ENCODE measurements at regions of chr17 and their contacts with region 1.

Region 1: GRCh38 chr17:67293251-67294203 is 48.5 kb upstream of the HELZ start:
- DNase-seq: peak; percentile 61 to 85
- ATAC-seq: peak; percentile 89 to 98 (median 98)
- H3K4me3 ChIP-seq: no peak overlapping the region
- H3K4me3 Mint-ChIP-seq: peak overlapping the region; percentile 35
- H3K27ac ChIP-seq: no peak overlapping the region
- H3K27ac Mint-ChIP-seq: no peak overlapping the region
- H3K4me1 ChIP-seq: peaks cover 14% of the 10 kb centered on the region
- H3K4me1 Mint-ChIP-seq: peaks cover 14 to 19% of the 10 kb centered on the region in 2 donors
- H3K27me3 ChIP-seq: no peaks in the 10 kb centered on the region
- H3K27me3 Mint-ChIP-seq: no peaks in the 10 kb centered on the region
- CTCF ChIP-seq: peak; percentile 86

Region 2: GRCh38 chr17:66715745-66716156 is 577.8 kb before region 1 on chr17:
- intact Hi-C with region 1: loop called (anchors 5 kb)
- DNase-seq: peak in 1 of 2 donors; percentile 65
- ATAC-seq: peak in 1 of 3 donors; percentile 24
- H3K4me3 ChIP-seq: no peak overlapping the region
- H3K4me3 Mint-ChIP-seq: no peak overlapping the region
- H3K27ac ChIP-seq: no peak overlapping the region
- H3K27ac Mint-ChIP-seq: no peak overlapping the region
- H3K4me1 ChIP-seq: peaks cover 46% of the 10 kb centered on the region
- H3K4me1 Mint-ChIP-seq: peaks cover 35 to 43% of the 10 kb centered on the region in 2 donors
- H3K27me3 ChIP-seq: no peaks in the 10 kb centered on the region
- H3K27me3 Mint-ChIP-seq: no peaks in the 10 kb centered on the region
- CTCF ChIP-seq: peak; percentile 64

Region 3: GRCh38 chr17:67157732-67158639 is 135.5 kb before region 1 on chr17:
- intact Hi-C with region 1: loop called (anchors 10 kb)
- DNase-seq: peak in 1 of 2 donors; percentile 19
- ATAC-seq: peak; percentile 62 to 71 (median 70)
- H3K4me3 ChIP-seq: no peak overlapping the region
- H3K4me3 Mint-ChIP-seq: peak overlapping the region; percentile 35
- H3K27ac ChIP-seq: peak overlapping the region; percentile 11
- H3K27ac Mint-ChIP-seq: peak overlapping the region; percentile 76 to 80
- H3K4me1 ChIP-seq: peaks cover 3% of the 10 kb centered on the region
- H3K4me1 Mint-ChIP-seq: peaks cover 38 to 44% of the 10 kb centered on the region in 2 donors
- H3K27me3 ChIP-seq: no peaks in the 10 kb centered on the region
- H3K27me3 Mint-ChIP-seq: no peaks in the 10 kb centered on the region
- CTCF ChIP-seq: no peak

Region 4: GRCh38 chr17:67200720-67201301 is 92.7 kb before region 1 on chr17:
- intact Hi-C with region 1: loop called (anchors 2 kb)
- DNase-seq: no peak
- ATAC-seq: peak in 2 of 3 donors; percentile 49 to 56
- H3K4me3 ChIP-seq: no peak overlapping the region
- H3K4me3 Mint-ChIP-seq: no peak overlapping the region
- H3K27ac ChIP-seq: no peak overlapping the region
- H3K27ac Mint-ChIP-seq: peak overlapping the region in 1 of 2 donors; percentile 16
- H3K4me1 ChIP-seq: no peaks in the 10 kb centered on the region
- H3K4me1 Mint-ChIP-seq: peaks cover 49 to 53% of the 10 kb centered on the region in 2 donors
- H3K27me3 ChIP-seq: no peaks in the 10 kb centered on the region
- H3K27me3 Mint-ChIP-seq: no peaks in the 10 kb centered on the region
- CTCF ChIP-seq: peak; percentile 71

Region 5: DNA sequence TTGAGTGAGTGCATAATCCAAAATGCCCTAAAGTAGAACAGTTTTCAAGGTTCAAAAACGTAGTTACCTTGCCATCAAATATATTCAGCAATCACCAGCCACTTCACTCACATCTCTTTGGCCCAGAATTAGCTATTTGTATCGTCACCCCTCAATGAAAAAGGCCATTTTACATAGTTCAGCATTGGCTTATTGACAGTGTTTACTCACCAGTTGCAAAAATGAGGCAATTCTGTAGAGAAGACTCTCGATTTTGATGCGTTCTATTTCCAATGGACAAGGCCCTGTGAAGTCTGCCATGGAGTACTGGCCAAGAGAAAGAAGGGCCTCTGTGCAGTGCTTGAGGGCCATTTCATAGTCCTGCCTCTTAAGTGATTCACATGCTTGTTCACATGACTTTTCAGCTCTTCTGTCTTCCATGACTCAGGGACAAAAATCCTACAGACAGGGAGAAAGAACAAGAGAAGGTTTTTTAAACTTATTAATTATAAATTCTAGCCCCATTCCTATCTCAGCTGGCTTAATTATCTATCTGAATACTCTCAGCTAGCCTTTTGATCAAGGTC is 75.1 kb before region 1 on chr17:
- intact Hi-C with region 1: loop called (anchors 5 kb)
- DNase-seq: no peak
- ATAC-seq: no peak
- H3K4me3 ChIP-seq: no peak overlapping the region
- H3K4me3 Mint-ChIP-seq: no peak overlapping the region
- H3K27ac ChIP-seq: no peak overlapping the region
- H3K27ac Mint-ChIP-seq: no peak overlapping the region
- H3K4me1 ChIP-seq: peaks cover 20% of the 10 kb centered on the region
- H3K4me1 Mint-ChIP-seq: peaks cover 48 to 51% of the 10 kb centered on the region in 2 donors
- H3K27me3 ChIP-seq: no peaks in the 10 kb centered on the region
- H3K27me3 Mint-ChIP-seq: no peaks in the 10 kb centered on the region
- CTCF ChIP-seq: no peak